ENCODE measurements at regions of chr3 and their contacts with region 1.

Region 1: GRCh38 chr3:100708967-100709841 is at the start of gene TFG:
- DNase-seq: peak; percentile 100
- ATAC-seq: peak; percentile 95
- H3K4me3 Mint-ChIP-seq: peak within 1 kb of the TSS; percentile 83
- H3K27ac Mint-ChIP-seq: peak within 1 kb of the TSS; percentile 92
- H3K4me1 Mint-ChIP-seq: peaks cover 38% of the 10 kb centered on the region
- H3K27me3 Mint-ChIP-seq: no peaks in the 10 kb centered on the region
- total RNA-seq, gene TFG: 59.8 to 63.1 TPM

Region 2: GRCh38 chr3:100463002-100463401 is 246.2 kb before region 1 on chr3:
- CTCF ChIA-PET with region 1: interaction called, 14 read pairs
- POLR2A ChIA-PET with region 1: no interaction called
- DNase-seq: peak; percentile 50
- ATAC-seq: peak; percentile 87
- H3K4me3 Mint-ChIP-seq: no peak overlapping the region
- H3K27ac Mint-ChIP-seq: no peak overlapping the region
- H3K4me1 Mint-ChIP-seq: peaks cover 8% of the 10 kb centered on the region
- H3K27me3 Mint-ChIP-seq: peaks cover 3% of the 10 kb centered on the region

Region 3: DNA sequence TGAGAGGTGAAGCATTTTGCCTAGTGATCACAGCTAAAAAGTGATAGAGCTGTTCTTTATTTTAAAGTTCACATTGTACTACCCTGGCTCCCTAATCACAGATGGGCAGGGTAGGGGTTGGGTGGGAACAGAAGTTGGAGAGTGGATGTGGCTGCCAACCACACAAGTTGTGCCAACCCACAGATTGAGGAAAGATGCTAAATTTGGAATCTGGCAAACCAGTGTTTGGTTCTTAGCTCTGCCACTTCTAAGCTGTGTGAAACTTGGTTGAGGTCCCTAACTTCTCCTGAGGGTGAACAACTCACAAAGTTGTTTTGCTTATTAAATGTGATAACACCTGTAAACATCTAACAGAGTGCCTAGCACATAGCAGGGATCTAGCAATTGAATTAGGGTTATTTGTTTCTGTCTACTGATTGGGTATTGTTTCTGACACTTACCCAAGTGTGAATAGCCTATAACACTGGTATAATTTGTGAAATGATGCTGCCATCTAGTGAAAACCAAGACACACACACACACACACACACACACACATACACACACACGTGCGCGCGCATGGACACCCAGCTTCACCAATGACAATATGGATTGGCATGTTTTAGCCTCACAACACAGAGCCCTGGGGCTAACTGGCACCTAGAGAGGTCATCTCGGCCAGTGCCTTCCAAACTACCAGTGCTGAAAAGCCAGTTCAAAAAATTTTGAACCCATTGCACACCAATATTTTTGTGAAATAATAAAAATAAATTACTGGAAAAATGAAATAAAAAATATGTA is 74.5 kb before region 1 on chr3:
- CTCF ChIA-PET with region 1: interaction called, 25 read pairs
- POLR2A ChIA-PET with region 1: interaction called, 5 read pairs
- DNase-seq: peak; percentile 69
- ATAC-seq: peak; percentile 73
- H3K4me3 Mint-ChIP-seq: peak overlapping the region; percentile 5
- H3K27ac Mint-ChIP-seq: peak overlapping the region; percentile 44
- H3K4me1 Mint-ChIP-seq: peaks cover 17% of the 10 kb centered on the region
- H3K27me3 Mint-ChIP-seq: peaks cover 3% of the 10 kb centered on the region

Region 4: GRCh38 chr3:100665230-100665629 is 44.0 kb before region 1 on chr3:
- CTCF ChIA-PET with region 1: interaction called, 21 read pairs
- POLR2A ChIA-PET with region 1: interaction called, 11 read pairs
- DNase-seq: peak; percentile 74
- ATAC-seq: peak; percentile 89
- H3K4me3 Mint-ChIP-seq: peak overlapping the region; percentile 37
- H3K27ac Mint-ChIP-seq: peak overlapping the region; percentile 82
- H3K4me1 Mint-ChIP-seq: peaks cover 32% of the 10 kb centered on the region
- H3K27me3 Mint-ChIP-seq: no peaks in the 10 kb centered on the region

Region 5: DNA sequence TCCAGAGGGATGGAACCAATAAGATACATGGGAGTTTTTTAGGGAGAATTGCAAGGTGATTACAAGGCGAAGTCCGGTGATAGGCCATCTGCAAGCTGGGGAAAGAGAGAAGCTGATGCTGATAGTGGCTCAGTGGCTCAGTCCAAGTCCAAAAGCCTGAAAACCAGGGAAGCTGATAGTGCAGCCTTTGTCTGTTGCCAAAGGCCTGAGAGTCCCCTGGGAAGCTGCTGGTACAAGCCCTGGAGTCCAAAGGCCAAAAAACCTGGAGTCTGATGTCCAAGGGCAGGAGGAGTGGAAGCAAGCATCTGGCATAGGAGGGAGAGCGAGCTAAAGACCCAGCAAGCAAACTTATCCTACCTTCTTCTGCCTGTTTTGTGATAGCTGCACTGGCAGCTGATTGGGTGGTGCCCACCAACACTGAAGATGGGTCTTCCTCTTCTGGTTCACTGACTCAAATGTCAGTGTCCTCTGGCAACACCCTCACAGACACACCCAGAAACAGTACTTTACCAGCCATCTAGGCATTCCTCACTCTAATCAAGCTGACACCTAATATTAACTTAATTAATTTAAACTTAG is 16.8 kb after region 1 on chr3:
- CTCF ChIA-PET with region 1: interaction called, 28 read pairs
- POLR2A ChIA-PET with region 1: interaction called, 10 read pairs
- DNase-seq: no peak
- ATAC-seq: no peak
- H3K4me3 Mint-ChIP-seq: no peak overlapping the region
- H3K27ac Mint-ChIP-seq: peak overlapping the region; percentile 28
- H3K4me1 Mint-ChIP-seq: peaks cover 17% of the 10 kb centered on the region
- H3K27me3 Mint-ChIP-seq: no peaks in the 10 kb centered on the region

Region 6: DNA sequence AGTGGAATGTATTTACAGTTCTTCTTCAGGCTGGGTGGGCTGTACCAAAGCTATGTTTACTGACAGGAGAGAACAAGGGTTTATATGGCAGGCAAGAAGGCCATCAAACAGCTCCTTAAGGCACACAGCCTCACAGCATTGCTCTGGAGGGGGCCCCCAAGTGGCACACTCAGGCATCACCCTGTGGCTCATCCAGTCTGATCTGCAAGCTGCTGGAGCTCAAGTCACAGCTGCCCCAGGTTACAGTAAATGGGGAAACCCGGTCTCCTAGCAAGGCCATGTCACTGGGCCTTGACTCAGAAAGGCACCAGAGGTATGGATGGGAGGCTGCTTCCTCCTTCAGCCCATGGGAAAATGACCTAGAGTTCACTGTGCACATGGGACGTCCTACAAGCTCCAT is 67.5 kb after region 1 on chr3:
- CTCF ChIA-PET with region 1: no interaction called
- POLR2A ChIA-PET with region 1: no interaction called
- DNase-seq: no peak
- ATAC-seq: no peak
- H3K4me3 Mint-ChIP-seq: no peak overlapping the region
- H3K27ac Mint-ChIP-seq: no peak overlapping the region
- H3K4me1 Mint-ChIP-seq: no peaks in the 10 kb centered on the region
- H3K27me3 Mint-ChIP-seq: no peaks in the 10 kb centered on the region

Region 7: DNA sequence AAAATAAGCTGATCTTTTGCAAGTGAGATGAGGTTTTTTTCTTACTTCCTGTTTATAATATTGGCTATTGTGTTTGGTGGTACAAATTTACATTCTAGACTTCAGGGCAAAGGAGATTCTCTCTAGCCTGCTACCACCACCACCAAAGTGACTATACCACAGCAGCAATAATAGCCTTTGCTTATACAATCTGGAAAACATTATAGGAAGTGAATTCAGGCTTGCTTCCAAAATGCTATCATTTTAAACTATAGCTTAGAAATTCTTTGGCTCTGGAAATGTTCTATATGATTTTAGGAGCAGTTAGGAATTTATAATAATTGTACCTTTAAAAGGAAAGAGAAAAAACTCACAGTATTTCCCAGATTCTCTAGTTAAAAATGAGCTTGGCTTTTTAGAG is 94.5 kb after region 1 on chr3:
- CTCF ChIA-PET with region 1: no interaction called
- POLR2A ChIA-PET with region 1: no interaction called
- DNase-seq: no peak
- ATAC-seq: no peak
- H3K4me3 Mint-ChIP-seq: no peak overlapping the region
- H3K27ac Mint-ChIP-seq: no peak overlapping the region
- H3K4me1 Mint-ChIP-seq: no peaks in the 10 kb centered on the region
- H3K27me3 Mint-ChIP-seq: peaks cover 10% of the 10 kb centered on the region

Measured in activated CD8-positive, alpha-beta T cell treated with anti-CD3 and anti-CD28 coated beads, Interleukin-2, amount 10 ng/mL, durations not matched to agents 7 days and 5 days (primary cell).